HepG2 (cell line): ENCODE measurements at regions of chr3 and their contacts with region 1.

Region 1: GRCh38 chr3:132047209-132047608 is 12.4 kb upstream of the CPNE4 start:
- DNase-seq: no peak
- ATAC-seq: no peak
- H3K4me3 ChIP-seq: no peak overlapping the region
- H3K27ac ChIP-seq: no peak overlapping the region
- H3K4me1 ChIP-seq: no peaks in the 10 kb centered on the region
- H3K27me3 ChIP-seq: no peaks in the 10 kb centered on the region
- CTCF ChIP-seq: no peak
- EP300 ChIP-seq: no peak
- POLR2A ChIP-seq: no peak
- RAD21 ChIP-seq: no peak

Region 2: GRCh38 chr3:132174500-132174899 is 127.3 kb after region 1 on chr3:
- CTCF ChIA-PET with region 1: no interaction called
- POLR2A ChIA-PET with region 1: no interaction called
- in situ Hi-C with region 1: loop called (anchors 10 kb)
- intact Hi-C with region 1: no loop called
- DNase-seq: no peak
- ATAC-seq: no peak
- H3K4me3 ChIP-seq: no peak overlapping the region
- H3K27ac ChIP-seq: no peak overlapping the region
- H3K4me1 ChIP-seq: no peaks in the 10 kb centered on the region
- H3K27me3 ChIP-seq: no peaks in the 10 kb centered on the region
- CTCF ChIP-seq: no peak
- EP300 ChIP-seq: no peak
- POLR2A ChIP-seq: no peak
- RAD21 ChIP-seq: no peak